Head of caudate nucleus (tissue), 42 donors: ENCODE measurements at regions of chr3 and their contacts with region 1.

Region 1: DNA sequence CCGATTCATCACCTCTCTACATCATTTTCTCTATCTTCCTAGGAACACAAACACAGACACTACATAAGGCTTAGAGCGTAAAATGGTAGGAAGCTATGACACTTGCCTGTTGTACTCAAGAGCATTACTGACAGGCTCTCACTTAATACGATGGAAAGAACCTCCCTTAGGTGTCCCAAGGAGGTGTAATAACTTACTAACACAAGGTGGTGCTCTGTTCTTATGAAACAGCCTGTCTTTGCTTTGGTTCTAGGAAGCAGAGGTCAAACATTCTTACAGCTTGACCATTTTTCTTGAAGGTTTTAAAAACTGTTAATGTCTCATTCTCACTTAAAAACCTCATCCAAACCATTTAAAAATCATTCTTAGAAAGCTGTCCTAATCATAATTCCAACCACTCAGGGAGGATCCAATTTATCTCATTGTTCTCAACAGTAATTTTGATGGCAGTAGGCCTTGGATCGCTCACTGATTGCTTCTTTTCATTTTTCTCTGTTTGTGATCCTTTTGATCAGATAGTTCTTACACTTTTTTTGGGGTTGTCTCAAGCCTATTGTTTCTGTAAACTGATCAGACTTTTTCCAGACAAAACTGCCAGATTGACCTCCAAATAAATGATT is 317.8 kb upstream of the AGTR1 start:
- DNase-seq: peak in 3 of 42 donors; percentile 7 to 12 (median 8)

Region 2: DNA sequence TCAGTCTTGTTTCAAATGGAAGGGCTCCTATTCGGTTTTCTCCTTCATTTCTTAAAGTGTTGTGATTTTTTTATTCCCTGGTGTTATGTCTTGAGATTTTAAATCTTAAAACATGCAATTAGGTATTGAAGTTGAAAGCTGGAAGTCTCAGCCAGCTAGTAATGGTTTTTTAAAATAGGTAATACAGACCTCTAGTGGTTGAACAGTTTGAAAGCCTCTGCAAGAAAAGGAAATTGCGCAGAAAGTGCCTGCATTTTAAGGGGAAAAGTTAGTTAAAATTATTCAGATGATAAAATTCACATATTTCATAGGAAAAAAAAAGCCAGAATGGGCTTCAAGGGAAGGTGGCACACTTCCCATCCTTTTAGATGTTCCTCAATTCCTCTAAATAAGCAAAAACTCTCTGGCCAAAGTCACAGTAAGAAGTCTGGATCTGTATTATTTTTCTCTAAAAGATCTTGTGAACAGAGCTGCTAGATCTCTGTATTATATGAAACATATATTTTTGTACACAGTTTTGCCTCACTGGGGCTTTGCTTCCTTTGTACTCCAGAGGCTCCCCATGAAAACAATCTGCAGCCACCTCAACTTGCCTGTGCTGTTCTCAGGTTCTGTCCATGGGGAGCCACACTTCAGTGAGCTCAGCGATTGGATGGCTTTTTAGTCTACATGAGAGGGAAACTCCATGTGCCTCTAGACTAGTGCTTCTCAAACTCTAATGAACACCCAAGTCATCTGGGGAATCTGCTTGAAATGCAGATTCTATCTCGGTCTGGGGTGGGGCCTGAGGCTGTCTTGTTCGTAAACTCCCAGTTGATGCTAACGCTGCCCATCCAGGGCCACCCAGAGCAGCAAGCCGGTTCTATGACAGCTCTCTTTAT is 339.3 kb after region 1 on chr3:
- intact Hi-C with region 1: loop called (anchors 10 kb)
- DNase-seq: no peak